A673 (cell line): ENCODE measurements at regions of chr14 and their contacts with region 1.

Region 1: GRCh38 chr14:39122330-39123138 is 8.4 kb downstream of the GEMIN2 start:
- DNase-seq: no peak
- H3K4me3 ChIP-seq: no peak overlapping the region
- H3K27ac ChIP-seq: no peak overlapping the region
- H3K4me1 ChIP-seq: no peaks in the 10 kb centered on the region
- H3K27me3 ChIP-seq: no peaks in the 10 kb centered on the region
- CTCF ChIP-seq: no peak

Region 2: GRCh38 chr14:39050389-39050788 is 72.1 kb before region 1 on chr14:
- CTCF ChIA-PET with region 1: no interaction called
- POLR2A ChIA-PET with region 1: interaction called, 10 read pairs
- intact Hi-C with region 1: no loop called
- DNase-seq: no peak
- H3K4me3 ChIP-seq: no peak overlapping the region
- H3K27ac ChIP-seq: no peak overlapping the region
- H3K4me1 ChIP-seq: no peaks in the 10 kb centered on the region
- H3K27me3 ChIP-seq: no peaks in the 10 kb centered on the region
- CTCF ChIP-seq: no peak

Region 3: DNA sequence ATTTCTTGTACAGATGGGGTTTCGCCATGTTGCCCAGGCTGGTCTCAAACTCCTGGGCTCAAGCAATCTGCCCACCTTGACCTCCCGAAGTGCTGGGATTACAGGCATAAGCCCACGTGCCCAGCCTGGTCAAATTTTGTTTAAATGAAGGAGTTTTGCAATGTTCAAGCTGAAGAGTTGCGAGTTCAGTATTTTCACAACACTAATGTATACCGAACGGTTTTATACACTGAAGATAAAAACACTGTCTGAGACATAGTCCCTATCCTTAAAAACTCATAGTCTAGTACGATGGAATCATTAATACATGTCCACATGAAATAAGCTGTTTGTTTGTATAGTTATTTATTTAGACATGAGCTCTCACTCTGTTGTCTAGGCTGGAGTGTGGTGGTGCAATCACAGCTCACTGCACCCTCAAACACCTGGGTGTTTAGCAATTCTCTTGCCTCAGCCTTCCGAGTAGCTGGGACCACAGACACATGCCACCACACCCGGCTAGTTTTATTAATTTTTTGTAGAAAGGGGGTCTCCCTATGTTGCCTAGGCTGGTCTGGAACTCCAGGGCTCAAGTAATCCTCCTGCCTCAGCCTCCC is 32.2 kb after region 1 on chr14:
- CTCF ChIA-PET with region 1: no interaction called
- POLR2A ChIA-PET with region 1: no interaction called
- intact Hi-C with region 1: no loop called
- DNase-seq: no peak
- H3K4me3 ChIP-seq: no peak overlapping the region
- H3K27ac ChIP-seq: no peak overlapping the region
- H3K4me1 ChIP-seq: no peaks in the 10 kb centered on the region
- H3K27me3 ChIP-seq: no peaks in the 10 kb centered on the region
- CTCF ChIP-seq: no peak